GM23248 (cell line): ENCODE measurements at regions of chr4 and their contacts with region 1.

Region 1: DNA sequence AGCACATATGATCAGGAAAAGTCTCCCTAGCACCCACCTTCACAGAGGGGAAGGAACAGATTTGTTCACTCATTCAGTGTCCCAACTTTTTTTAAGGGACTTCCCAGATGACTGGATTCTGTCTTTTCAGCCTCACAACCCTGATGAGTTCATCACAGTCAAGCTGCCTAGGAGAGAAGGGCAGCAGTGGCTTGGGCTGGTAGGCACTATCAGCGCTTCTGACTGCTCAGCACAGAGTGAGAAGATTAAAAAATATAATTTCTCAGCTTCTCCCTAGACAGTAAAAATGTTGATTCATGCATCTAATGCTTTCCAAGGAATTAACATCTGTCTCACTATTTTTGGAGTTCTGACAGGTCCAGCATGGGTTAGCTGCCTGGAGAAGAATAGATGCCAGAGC is 328.2 kb downstream of the DTHD1 start:
- DNase-seq: no peak
- H3K4me3 ChIP-seq: no peak overlapping the region
- H3K27ac ChIP-seq: no peak overlapping the region
- H3K4me1 ChIP-seq: no peaks in the 10 kb centered on the region
- H3K27me3 ChIP-seq: no peaks in the 10 kb centered on the region

Region 2: DNA sequence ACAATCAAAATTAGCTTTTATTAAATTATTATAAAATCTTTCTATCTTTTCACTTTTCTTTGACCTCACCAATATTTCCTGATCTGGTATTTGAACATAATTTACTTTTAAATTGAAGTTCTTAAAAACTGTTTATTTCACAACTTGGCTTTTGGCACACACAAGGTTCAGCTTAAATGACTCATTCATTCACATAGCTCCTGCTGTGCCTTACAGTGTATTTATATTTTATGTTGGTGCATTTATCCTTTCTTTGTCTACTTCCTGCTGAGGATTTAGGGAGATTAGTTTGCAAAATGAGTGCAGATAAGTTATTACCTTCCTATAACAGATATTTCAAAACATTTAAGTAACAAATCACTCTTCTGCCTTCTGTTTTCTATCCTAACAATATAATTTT is 102.4 kb after region 1 on chr4:
- in situ Hi-C with region 1: loop called (anchors 25 kb)
- DNase-seq: no peak
- H3K4me3 ChIP-seq: no peak overlapping the region
- H3K27ac ChIP-seq: no peak overlapping the region
- H3K4me1 ChIP-seq: no peaks in the 10 kb centered on the region
- H3K27me3 ChIP-seq: no peaks in the 10 kb centered on the region

Region 3: DNA sequence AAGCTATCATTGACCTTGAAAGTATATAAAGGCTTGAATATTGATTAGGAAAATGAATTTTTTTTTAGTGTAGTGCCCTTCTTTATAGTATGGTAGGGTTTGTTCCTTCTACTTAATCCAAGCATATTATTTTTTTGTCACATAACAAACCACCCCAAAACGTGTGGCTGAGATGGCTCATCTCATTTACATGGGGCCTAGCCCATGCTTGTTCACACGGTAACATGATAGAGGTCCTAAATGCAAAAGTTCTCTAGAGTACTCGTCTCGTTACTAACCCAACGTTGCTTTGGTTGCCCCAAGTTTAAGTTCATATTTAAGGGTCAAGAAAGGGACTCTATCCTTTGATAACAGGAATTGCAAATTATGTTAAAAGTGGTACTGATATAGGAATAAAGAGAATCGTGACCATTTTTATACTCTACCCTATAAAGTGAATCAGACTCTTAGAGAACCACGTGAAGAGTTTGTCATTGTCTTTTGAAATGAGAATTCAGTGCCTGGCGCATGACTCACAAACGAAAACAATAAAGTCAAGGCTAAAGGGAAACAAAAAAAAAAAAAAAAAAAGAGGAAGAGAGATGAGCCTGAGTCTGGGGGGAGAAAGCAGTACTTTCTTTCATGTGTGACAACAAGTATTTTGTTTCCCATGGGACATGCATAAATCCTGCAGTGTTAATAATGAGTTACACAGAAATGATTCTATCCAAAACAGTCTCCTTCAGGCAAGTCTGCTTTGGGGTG is 232.1 kb after region 1 on chr4:
- in situ Hi-C with region 1: no loop called
- DNase-seq: no peak
- H3K4me3 ChIP-seq: no peak overlapping the region
- H3K27ac ChIP-seq: no peak overlapping the region
- H3K4me1 ChIP-seq: no peaks in the 10 kb centered on the region
- H3K27me3 ChIP-seq: no peaks in the 10 kb centered on the region